BJ (cell line): ENCODE measurements at regions of chr12 and their contacts with region 1.

Region 1: DNA sequence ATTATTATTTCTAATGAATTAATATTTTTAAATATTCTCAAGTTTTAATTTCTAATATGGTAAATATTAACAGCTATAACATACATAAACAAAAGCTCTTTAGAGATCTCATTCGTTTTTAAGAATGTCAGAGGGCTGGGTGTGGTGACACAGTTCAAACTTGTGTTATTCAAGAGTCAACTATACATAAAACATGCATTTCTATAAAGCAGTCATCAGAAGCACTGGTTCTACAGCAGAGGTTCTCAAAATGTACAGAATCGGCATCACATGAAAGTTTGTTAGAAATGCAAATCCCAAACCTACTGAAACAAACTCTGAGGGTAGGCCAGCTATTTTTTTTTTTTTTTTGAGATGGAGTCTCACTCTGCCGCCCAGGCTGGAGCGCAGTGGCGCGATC is 34.6 kb downstream of the CLIP1 start:
- DNase-seq: no peak
- H3K4me3 ChIP-seq: no peak overlapping the region
- H3K27me3 ChIP-seq: no peaks in the 10 kb centered on the region
- CTCF ChIP-seq: no peak

Region 2: DNA sequence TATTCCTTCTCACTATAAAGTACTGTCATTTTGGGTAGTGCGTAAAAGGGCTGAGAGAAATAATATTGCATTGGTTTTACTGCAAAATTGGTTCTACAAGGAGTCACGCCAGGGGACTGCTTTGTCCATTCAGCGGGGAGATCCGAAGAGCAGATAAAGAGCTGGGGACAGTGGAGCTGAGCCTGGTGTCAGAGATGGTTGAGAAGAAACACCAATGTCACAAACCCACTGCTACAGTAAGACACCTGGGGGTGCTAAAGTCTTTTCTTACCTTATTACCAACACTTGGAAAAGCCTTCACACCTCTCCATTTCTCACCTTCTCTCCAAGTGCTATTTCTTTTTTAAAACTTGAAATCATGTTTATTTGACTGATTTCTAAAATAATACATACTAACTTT is 228.0 kb before region 1 on chr12:
- CTCF ChIA-PET with region 1: no interaction called
- POLR2A ChIA-PET with region 1: no interaction called
- DNase-seq: no peak
- H3K4me3 ChIP-seq: no peak overlapping the region
- H3K27me3 ChIP-seq: peaks cover 3% of the 10 kb centered on the region; the same call in 1 of the 2 replicates
- CTCF ChIP-seq: no peak

Region 3: DNA sequence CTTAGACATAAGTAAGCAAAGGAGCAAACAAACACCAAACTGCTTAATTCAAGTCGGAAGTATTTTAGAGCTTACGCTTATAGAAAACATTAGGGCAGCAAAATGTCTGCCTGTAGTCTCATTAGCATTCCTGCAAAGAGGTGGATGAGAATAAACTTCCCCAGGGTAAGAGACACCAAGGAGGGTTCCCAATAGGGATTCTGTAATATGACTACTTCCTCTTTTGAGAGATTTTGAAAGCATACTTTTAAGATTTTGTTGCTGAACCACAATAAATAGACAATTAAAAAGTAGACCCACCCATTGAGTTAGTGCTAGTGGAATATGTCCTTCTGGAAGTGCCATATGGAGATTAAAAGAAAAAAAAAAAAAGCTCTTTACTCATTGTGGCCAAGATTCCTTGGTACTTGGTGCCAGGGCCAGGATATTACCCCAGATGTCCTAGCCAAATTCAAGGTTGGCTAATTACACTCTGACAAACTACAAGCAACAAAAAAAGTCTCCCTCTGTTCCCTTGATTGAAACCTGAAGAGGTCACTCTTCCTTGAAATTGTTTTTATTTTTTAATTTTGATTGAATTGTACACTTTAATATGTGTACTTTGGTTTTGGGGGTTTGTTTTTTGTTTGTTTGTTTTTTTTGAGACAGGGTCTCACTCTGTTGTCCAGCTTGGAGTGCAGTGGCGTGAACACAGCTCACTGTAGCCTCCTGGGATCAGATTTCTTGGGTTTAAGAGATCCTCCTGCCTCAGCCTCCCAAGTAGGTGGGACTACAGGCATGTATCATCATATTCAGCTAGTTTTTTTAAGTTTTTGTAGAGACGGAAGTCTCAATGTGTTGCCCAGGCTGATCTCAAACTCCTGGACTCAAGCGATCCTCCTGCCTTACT is 25.9 kb after region 1 on chr12:
- CTCF ChIA-PET with region 1: no interaction called
- POLR2A ChIA-PET with region 1: interaction called, 14 read pairs
- DNase-seq: no peak
- H3K4me3 ChIP-seq: no peak overlapping the region
- H3K27me3 ChIP-seq: no peaks in the 10 kb centered on the region
- CTCF ChIP-seq: no peak

Region 4: GRCh38 chr12:122517877-122518276 is 130.0 kb after region 1 on chr12:
- CTCF ChIA-PET with region 1: no interaction called
- POLR2A ChIA-PET with region 1: no interaction called
- DNase-seq: peak; percentile 71
- H3K4me3 ChIP-seq: no peak overlapping the region
- H3K27me3 ChIP-seq: no peaks in the 10 kb centered on the region
- CTCF ChIP-seq: no peak